ENCODE measurements at regions of chr18 and their contacts with region 1.

Region 1: DNA sequence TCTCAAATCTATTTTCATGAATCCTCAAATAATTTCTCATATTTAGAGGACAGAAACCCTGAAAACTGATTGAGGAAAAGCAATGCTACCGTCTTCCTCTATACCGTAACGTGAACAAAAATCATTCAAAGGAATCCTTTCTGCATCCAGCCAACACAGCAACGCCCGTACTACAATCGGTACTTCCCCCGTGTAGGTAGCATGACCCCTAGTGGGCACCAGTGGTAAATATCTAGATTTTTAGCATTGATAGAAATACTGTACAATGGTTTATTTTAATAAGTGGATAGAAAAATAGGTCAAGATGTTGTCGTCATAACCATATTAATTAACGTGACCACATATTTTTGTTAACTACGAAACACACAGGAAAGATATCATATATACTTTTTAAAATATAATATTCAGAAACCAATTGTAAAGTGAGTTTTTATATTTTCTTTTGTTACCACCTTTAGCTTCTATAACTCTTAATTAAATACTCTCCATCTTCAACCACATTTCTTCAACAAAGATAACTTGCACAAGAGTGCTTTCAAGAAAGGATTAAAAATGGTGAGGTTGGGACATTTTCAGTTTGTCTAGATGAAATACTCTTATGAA is 194.1 kb downstream of the SS18 start:
- DNase-seq: peak; percentile 48
- ATAC-seq: peak; percentile 42
- H3K4me3 Mint-ChIP-seq: no peak overlapping the region
- H3K27ac Mint-ChIP-seq: no peak overlapping the region
- H3K4me1 Mint-ChIP-seq: no peaks in the 10 kb centered on the region
- H3K27me3 Mint-ChIP-seq: peaks cover 14% of the 10 kb centered on the region

Region 2: DNA sequence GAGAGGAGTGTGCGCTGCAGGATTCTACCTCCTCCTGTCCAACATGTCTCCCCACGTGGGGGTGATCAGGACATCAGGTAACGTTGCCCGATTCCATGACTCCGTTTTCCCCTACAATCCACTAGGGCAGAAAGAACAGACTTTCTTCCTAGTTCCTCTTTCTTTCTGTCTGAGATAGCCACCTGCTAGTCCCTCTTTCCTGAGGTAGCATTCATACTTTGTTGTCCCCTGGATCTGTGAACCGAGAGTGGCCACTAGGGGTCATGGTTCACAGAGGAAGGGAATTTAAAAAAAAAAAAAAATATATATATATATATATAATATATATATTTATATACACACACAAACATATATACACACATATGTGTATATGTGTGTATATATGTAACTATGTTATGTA is 334.4 kb before region 1 on chr18:
- CTCF ChIA-PET with region 1: no interaction called
- POLR2A ChIA-PET with region 1: no interaction called
- intact Hi-C with region 1: loop called in 1 of 2 experiments (anchors 10 kb)
- DNase-seq: peak; percentile 22
- ATAC-seq: no peak
- H3K4me3 Mint-ChIP-seq: no peak overlapping the region
- H3K27ac Mint-ChIP-seq: no peak overlapping the region
- H3K4me1 Mint-ChIP-seq: no peaks in the 10 kb centered on the region
- H3K27me3 Mint-ChIP-seq: no peaks in the 10 kb centered on the region

Region 3: GRCh38 chr18:26119246-26119645 is 223.0 kb after region 1 on chr18:
- CTCF ChIA-PET with region 1: no interaction called
- POLR2A ChIA-PET with region 1: no interaction called
- intact Hi-C with region 1: no loop called
- DNase-seq: no peak
- ATAC-seq: no peak
- H3K4me3 Mint-ChIP-seq: no peak overlapping the region
- H3K27ac Mint-ChIP-seq: peak overlapping the region; percentile 6
- H3K4me1 Mint-ChIP-seq: no peaks in the 10 kb centered on the region
- H3K27me3 Mint-ChIP-seq: peaks cover 2% of the 10 kb centered on the region

Measured in activated CD4-positive, alpha-beta T cell treated with anti-CD3 and anti-CD28 coated beads for 36 hours (primary cell).